ENCODE measurements at regions of chr2 and their contacts with region 1.

Region 1: GRCh38 chr2:44044281-44044720 is 48.5 kb upstream of the LRPPRC start:
- DNase-seq: peak; percentile 9
- H3K4me3 ChIP-seq: no peak overlapping the region
- H3K27me3 ChIP-seq: peaks cover 5% of the 10 kb centered on the region
- CTCF ChIP-seq: peak; percentile 97

Region 2: DNA sequence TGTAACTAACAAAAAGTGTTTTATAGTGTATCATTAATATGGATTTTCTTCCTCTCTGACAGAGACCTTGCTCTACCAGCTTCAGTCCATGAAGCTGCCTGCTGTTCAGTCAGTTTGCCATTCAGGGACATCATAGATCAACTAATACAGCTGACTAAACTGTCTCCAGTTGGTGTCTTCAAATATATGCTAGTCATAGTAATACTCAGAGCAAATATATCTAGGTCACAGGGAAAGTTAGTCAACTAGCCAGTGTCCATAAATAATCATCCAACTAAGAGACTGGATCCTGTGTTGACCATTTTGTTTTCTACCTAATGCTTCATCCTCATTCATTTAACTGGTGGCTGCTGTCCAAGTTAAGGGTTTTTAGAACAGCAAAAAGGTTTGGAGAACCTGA is 10.4 kb before region 1 on chr2:
- CTCF ChIA-PET with region 1: interaction called, 10 read pairs
- POLR2A ChIA-PET with region 1: no interaction called
- DNase-seq: no peak
- H3K4me3 ChIP-seq: no peak overlapping the region
- H3K27me3 ChIP-seq: peaks cover 1% of the 10 kb centered on the region; the same call in 1 of the 2 replicates
- CTCF ChIP-seq: no peak

Region 3: DNA sequence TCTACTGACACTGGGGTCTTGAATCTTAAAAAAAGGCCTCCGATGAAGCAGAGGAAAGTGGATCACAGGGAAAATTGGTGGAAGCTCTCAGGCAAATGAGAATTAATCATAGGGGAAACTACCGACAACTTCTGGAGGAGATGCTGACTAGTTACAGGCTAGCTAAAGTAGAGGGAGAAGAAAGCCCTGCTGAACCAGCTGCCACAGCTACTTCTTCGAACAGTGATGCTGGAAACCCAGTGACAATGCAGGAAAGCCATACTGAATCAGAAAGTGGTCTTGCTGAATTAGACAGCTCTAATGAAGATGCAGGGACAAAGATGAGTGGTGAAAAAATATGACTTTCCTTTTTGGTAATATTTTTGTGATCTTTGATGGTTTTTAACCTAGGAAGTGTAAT is 186.1 kb after region 1 on chr2:
- CTCF ChIA-PET with region 1: no interaction called
- POLR2A ChIA-PET with region 1: no interaction called
- DNase-seq: no peak
- H3K4me3 ChIP-seq: no peak overlapping the region
- H3K27me3 ChIP-seq: no peaks in the 10 kb centered on the region
- CTCF ChIP-seq: no peak

Region 4: GRCh38 chr2:44244129-44244871 is 200.0 kb after region 1 on chr2:
- CTCF ChIA-PET with region 1: interaction called, 11 read pairs
- POLR2A ChIA-PET with region 1: no interaction called
- DNase-seq: no peak
- H3K4me3 ChIP-seq: peak overlapping the region; percentile 27; the same call in 1 of the 2 replicates
- H3K27me3 ChIP-seq: no peaks in the 10 kb centered on the region
- CTCF ChIP-seq: peak; percentile 58

Region 5: GRCh38 chr2:44291281-44292248 is 247.3 kb after region 1 on chr2:
- CTCF ChIA-PET with region 1: interaction called, 10 read pairs
- POLR2A ChIA-PET with region 1: no interaction called
- DNase-seq: peak; percentile 39
- H3K4me3 ChIP-seq: no peak overlapping the region
- H3K27me3 ChIP-seq: no peaks in the 10 kb centered on the region
- CTCF ChIP-seq: peak; percentile 76

Region 6: DNA sequence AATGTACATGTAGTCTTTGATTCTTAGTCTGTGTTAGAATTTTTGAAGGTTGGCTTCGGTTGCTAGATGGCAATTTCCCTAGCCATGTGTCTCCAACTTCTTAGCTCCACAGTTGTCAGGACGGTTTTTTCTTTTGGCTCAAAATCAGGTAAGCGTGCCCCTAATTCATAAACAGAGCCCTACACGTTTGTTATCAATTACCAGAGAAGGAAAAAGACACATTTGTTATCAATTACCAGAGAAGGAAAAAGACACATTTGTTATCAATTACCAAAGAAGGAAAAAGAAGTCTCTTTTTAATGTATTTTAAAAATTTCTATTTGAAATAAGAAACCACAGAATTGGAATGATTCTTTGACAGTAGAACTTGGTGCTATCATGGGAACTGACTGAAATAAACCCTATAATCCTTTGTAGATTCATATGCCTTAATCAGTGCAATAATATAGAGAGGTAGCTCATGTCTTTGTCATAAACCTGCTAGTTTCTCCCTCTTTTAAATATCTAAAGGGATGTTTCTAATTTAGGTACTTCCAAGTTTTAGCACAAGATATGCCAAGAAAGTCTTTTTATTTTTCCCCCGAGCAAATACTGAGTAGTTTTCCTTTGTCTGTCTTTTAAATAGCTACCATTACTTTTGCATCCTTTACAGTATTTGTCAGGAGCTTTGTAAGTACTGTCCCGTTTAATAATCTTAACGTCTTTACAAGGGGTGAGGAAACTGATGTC is 353.3 kb after region 1 on chr2:
- CTCF ChIA-PET with region 1: interaction called, 4 read pairs
- POLR2A ChIA-PET with region 1: interaction called, 12 read pairs
- DNase-seq: no peak
- H3K4me3 ChIP-seq: no peak overlapping the region
- H3K27me3 ChIP-seq: no peaks in the 10 kb centered on the region
- CTCF ChIP-seq: no peak